ENCODE measurements at regions of chr12 and their contacts with region 1.

Region 1: DNA sequence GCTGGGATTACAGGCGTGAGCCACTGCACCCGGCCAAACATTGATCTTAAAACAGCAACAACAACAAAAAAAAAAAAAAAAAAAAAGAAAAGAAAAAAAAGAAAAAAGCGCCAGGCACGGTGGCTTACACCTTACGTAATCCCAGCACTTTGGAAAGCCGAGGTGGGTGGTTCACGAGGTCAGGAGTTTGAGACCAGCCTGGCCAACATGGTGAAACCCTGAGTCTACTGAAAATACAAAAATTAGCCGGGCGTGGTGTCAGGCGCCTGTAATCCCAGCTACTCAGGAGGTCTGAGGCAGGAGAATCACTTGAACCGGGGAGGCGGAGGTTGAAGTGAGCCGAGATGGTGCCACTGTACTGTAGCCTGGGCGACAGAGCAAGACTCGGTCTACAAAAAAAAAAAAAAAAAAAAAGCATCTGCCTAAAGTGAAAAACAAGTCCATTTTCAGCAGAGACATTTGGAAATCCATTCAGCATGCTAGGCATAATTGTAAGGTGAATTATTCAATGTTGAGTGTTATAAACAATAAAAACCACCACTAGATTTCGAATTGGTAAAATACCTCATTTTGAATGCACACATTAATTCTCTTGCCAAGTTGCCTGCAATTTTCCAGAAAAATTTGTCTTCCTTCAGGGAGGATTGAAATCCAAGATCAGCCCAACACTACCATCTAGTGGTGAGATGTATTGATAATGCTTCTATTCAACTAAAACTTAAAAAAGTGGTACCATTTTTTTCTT is 8.0 kb upstream of the CERS5 start:
- DNase-seq: no peak
- H3K4me3 ChIP-seq: no peak overlapping the region
- H3K27ac ChIP-seq: no peak overlapping the region
- H3K4me1 ChIP-seq: no peaks in the 10 kb centered on the region
- H3K27me3 ChIP-seq: no peaks in the 10 kb centered on the region
- CTCF ChIP-seq: peak; percentile 29 to 78 (median 68)
- POLR2A ChIP-seq: no peak

Region 2: GRCh38 chr12:50084775-50085614 is 90.1 kb before region 1 on chr12 and contains the start of gene SMARCD1:
- intact Hi-C with region 1: loop called (anchors 10 kb)
- DNase-seq: peak; percentile 39
- H3K4me3 ChIP-seq: peak within 1 kb of the TSS; percentile 78 to 97 (median 86)
- H3K27ac ChIP-seq: peak within 1 kb of the TSS; percentile 94 to 99 (median 94)
- H3K4me1 ChIP-seq: peaks cover 10 to 55% (median 10%) of the 10 kb centered on the region in 3 donors
- H3K27me3 ChIP-seq: no peaks in the 10 kb centered on the region
- CTCF ChIP-seq: peak in 2 of 6 experiments; percentile 30 to 31
- POLR2A ChIP-seq: no peak
- total RNA-seq, gene SMARCD1: 34.5 to 67.8 (median 46.5) TPM

Measured in esophagus squamous epithelium (tissue), 5 donors.